PC-3 (cell line): ENCODE measurements at regions of chr22 and their contacts with region 1.

Region 1: DNA sequence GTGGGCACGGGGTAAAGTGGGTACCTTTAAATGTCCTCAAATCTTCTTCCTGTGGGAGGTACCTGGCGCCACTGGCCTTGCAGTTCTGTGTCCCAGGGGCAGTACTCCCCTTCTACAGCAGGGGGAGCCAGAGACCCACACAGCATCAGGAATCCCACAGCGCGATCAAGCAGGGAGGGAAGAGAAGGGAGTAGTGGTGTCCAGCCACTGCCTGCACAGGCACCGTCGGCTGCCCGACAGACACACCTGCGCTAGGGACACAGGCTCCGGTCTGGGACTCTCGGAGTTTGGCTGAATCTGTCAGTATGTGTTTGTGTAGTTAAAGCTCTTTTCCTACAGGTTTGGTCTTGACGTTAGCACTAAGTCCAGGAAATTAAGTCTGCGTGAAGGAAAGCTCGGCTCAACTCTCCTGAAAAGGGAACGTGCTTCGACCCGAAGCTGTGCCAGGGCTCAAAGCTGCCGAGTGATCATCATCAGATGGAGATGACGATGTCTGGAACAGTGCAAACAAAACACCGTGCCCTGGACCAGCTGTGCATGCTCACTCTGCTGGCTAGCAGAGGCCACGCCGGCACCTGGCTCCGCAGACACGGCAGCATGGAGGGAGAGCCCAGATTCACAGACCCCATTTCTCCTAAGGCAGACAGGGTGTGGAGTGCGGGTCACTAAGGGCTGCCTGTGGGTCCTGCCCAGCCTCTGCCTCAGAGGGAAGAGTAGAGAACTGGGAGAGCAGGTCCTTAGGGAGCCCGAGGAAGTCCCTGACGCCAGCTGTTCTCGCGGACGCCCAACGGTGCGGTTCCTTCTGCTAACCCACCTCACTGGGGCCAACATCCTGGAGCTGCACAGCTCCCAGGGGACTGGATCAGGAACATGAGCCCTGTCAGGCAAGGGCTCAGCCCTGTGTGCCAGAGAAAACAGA is 56.0 kb upstream of the BID start:
- DNase-seq: peak; percentile 80
- ATAC-seq: peak; percentile 93
- H3K4me3 ChIP-seq: no peak overlapping the region
- H3K27ac ChIP-seq: no peak overlapping the region
- H3K4me1 ChIP-seq: no peaks in the 10 kb centered on the region
- H3K27me3 ChIP-seq: no peaks in the 10 kb centered on the region
- CTCF ChIP-seq: peak; percentile 82

Region 2: GRCh38 chr22:18001040-18001893 is 171.0 kb after region 1 on chr22:
- CTCF ChIA-PET with region 1: no interaction called
- POLR2A ChIA-PET with region 1: no interaction called
- intact Hi-C with region 1: loop called (anchors 10 kb)
- DNase-seq: peak; percentile 93
- ATAC-seq: peak; percentile 89
- H3K4me3 ChIP-seq: peak overlapping the region; percentile 85
- H3K27ac ChIP-seq: peak overlapping the region; percentile 77
- H3K4me1 ChIP-seq: peaks cover 17% of the 10 kb centered on the region
- H3K27me3 ChIP-seq: no peaks in the 10 kb centered on the region
- CTCF ChIP-seq: peak; percentile 3; the same call in 1 of the 2 replicates

Region 3: DNA sequence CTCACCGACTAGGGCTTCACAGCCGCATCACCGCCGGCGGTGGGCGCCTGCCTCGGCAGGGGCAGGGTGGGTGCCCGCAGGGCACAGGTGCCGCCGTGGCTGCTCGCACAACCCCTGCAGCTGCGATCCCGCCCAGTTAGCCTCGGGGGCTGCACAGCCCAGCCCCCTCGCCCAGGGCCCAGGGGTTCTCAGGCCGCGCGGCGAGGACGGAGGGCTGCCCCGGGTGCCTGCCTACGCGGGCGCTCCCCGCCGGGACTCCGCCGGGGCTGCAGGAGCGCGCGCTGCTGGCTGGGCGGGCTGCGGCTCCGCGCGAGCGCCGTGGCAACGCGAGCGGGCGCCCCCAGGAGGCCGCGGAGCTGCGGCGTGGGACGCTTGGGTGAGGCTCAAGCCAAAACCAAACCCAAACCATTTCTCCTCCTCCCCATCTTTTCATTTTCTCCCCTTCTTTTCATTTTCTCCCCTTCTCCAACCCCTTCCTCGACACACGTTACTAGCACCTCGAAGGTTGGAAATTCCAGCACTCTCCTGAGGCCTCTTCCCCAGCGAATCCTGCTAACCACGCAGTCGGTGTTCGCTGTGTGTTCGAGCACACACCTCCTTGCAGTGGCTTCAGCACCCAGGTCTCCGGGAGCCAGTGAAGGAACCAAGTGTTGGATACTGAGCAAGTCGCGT is 194.1 kb after region 1 on chr22 and contains the start of gene MICAL3:
- CTCF ChIA-PET with region 1: no interaction called
- POLR2A ChIA-PET with region 1: no interaction called
- intact Hi-C with region 1: loop called (anchors 10 kb)
- DNase-seq: peak; percentile 74
- ATAC-seq: peak; percentile 87
- H3K4me3 ChIP-seq: peak within 1 kb of the TSS; percentile 81
- H3K27ac ChIP-seq: peak within 1 kb of the TSS; percentile 33
- H3K4me1 ChIP-seq: peaks cover 8% of the 10 kb centered on the region
- H3K27me3 ChIP-seq: no peaks in the 10 kb centered on the region
- CTCF ChIP-seq: peak; percentile 51; the same call in 1 of the 2 replicates
- total RNA-seq, gene MICAL3: 23.7 and 27.8 TPM in 2 replicates